Activated CD8-positive, alpha-beta T cell treated with anti-CD3 and anti-CD28 coated beads, Interleukin-2, amount 10 ng/mL, durations not matched to agents 7 days and 5 days (primary cell): ENCODE measurements at regions of chr17 and their contacts with region 1.

Region 1: DNA sequence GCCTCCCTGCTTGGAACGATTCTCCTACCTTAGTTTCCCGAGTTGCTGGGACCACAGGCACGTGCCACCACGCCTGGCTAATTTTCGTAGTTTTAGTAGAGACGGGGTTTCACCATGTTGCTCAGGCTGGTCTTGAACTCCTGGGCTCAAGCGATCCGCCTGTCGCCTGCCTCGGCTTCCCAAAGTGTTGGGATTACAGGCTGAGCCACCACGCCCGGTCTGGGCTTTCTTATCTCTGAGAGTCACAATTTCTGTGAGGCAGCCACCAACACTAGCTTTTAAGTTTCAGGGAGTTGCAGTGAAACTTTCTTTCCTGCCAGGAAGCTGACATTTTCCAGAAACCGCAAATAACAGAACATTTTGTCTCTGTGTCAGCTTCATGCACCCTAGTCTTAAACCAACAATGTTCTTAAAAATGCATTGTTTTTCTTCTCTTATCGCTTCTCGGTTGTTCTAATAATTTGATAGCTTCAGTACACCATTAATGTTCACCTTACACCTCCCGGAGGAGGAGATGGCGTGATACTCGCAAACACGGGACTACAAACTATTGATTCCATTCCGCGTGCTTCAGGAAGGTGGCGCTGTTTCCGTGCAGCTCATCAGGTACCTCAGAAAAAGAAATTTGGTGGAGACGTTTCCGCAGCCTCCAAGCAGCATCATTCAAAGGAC is 7.4 kb upstream of the DHRS7B start:
- DNase-seq: peak; percentile 81
- ATAC-seq: peak; percentile 84
- H3K4me3 Mint-ChIP-seq: no peak overlapping the region
- H3K27ac Mint-ChIP-seq: no peak overlapping the region
- H3K4me1 Mint-ChIP-seq: peaks cover 11% of the 10 kb centered on the region
- H3K27me3 Mint-ChIP-seq: peaks cover 8% of the 10 kb centered on the region

Region 2: GRCh38 chr17:21214015-21214776 is 94.8 kb after region 1 on chr17 and contains the start of gene TMEM11:
- CTCF ChIA-PET with region 1: interaction called, 19 read pairs
- POLR2A ChIA-PET with region 1: no interaction called
- DNase-seq: peak; percentile 96
- ATAC-seq: peak; percentile 92
- H3K4me3 Mint-ChIP-seq: peak within 1 kb of the TSS; percentile 93
- H3K27ac Mint-ChIP-seq: peak within 1 kb of the TSS; percentile 95
- H3K4me1 Mint-ChIP-seq: peaks cover 42% of the 10 kb centered on the region
- H3K27me3 Mint-ChIP-seq: no peaks in the 10 kb centered on the region
- total RNA-seq, gene TMEM11: 22.2 to 27.7 TPM

Region 3: DNA sequence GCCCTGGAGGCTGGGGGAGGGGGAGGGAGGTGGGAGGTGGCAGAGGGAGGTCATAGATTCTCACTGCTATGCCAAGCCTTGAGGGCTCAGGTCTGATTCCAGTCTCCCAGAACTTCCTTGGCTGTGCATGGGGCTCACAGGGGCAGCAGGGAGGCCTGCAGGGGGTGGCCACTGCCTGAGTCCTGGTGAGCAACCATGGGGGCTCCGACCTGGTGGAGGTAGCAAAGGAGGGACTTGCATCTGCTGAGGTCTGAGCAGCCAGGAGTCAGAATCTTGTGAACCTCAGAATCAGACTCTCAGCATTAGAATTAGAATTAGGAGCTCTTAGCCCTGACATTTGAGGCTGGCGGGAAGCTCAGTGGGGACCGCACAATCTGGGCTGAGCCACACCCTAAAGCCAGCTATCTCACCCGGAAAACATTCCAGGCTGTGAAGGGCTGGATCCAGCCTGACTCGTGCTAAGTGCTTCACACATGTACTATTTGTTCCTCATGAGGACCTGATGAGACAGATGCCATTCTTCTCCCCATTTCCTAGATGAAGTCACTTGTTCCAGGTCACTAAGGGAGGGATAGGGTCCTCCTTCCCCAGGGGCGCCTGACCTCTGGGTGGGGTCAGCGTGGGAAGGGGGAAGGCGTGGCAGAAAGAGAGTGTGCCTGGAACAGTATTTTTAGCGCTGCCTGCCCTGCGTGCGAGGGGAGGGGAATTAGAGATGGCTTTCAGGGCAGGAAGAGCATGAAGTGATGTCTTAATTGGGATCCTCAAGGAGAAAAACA is 239.5 kb after region 1 on chr17:
- CTCF ChIA-PET with region 1: no interaction called
- POLR2A ChIA-PET with region 1: no interaction called
- DNase-seq: no peak
- ATAC-seq: no peak
- H3K4me3 Mint-ChIP-seq: no peak overlapping the region
- H3K27ac Mint-ChIP-seq: no peak overlapping the region
- H3K4me1 Mint-ChIP-seq: no peaks in the 10 kb centered on the region
- H3K27me3 Mint-ChIP-seq: no peaks in the 10 kb centered on the region